ENCODE measurements at regions of chr5 and their contacts with region 1.

Region 1: GRCh38 chr5:103582364-103582763 is 19.8 kb upstream of the NUDT12 start:
- DNase-seq: peak in 3 of 10 donors; percentile 17 to 51 (median 38)
- H3K4me3 ChIP-seq: no peak overlapping the region
- H3K27ac ChIP-seq: no peak overlapping the region
- H3K27me3 ChIP-seq: no peaks in the 10 kb centered on the region
- CTCF ChIP-seq: peak; percentile 38 to 79 (median 65)

Region 2: DNA sequence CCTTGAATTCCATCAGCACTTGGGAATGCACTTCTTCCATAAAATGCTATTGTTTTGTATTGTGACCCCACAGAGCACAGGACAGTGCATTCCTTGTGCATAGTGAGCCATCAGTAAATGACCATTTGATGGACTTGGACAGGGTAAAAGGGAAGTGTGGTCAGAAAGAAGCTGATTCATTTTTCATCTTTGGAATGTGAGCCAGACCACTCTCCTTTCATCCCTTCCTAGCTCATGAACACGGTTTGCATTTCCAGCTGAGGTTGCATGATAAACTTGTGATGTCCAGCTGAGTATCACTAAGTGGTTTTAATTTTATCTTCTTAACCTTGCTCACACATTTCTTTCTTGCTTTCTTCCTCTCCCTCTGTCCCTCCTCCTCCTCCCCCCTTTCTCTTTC is 121.1 kb before region 1 on chr5:
- intact Hi-C with region 1: no loop called
- DNase-seq: no peak
- H3K4me3 ChIP-seq: no peak overlapping the region
- H3K27ac ChIP-seq: no peak overlapping the region
- H3K27me3 ChIP-seq: no peaks in the 10 kb centered on the region
- CTCF ChIP-seq: no peak

Region 3: DNA sequence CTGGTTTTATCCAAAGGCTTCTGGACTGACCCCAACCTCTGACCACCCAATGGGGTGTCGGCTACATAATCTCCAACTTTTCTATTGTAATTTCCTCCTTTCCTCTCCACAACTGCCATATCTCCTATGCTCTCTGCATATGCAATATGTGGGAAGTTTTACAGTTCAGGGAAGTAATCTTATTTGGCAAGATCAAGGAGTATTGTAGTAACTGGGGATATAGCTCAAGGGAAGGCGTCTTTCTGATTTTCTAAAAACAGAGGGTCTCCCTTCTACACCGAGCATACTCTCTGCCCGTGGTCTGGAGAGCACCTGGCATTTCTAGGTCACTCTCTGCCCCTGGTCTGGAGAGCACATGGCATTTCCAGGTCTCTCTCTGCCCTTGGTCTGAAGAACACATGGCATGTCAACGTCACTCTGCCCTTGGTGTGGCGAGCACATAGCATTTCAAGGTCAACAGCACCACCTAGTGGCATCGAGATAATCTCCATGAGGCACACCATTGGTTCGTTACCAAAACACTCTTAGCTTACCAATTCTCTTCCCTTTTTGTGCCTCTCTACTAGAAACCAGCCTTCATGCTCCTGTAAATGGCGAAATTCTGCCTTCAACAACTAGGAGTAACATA is 596.6 kb after region 1 on chr5:
- intact Hi-C with region 1: loop called (anchors 5 kb)
- DNase-seq: peak in 4 of 10 donors; percentile 24 to 57 (median 47)
- H3K4me3 ChIP-seq: no peak overlapping the region
- H3K27ac ChIP-seq: no peak overlapping the region
- H3K27me3 ChIP-seq: no peaks in the 10 kb centered on the region
- CTCF ChIP-seq: peak in 55 of 56 donors; percentile 24 to 81 (median 59)

Region 4: GRCh38 chr5:104184264-104184663 is 601.9 kb after region 1 on chr5:
- intact Hi-C with region 1: loop called (anchors 5 kb)
- DNase-seq: no peak
- H3K4me3 ChIP-seq: no peak overlapping the region
- H3K27ac ChIP-seq: no peak overlapping the region
- H3K27me3 ChIP-seq: no peaks in the 10 kb centered on the region
- CTCF ChIP-seq: no peak

Measured in dorsolateral prefrontal cortex (tissue), 120 donors.